ENCODE measurements at regions of chr13 and their contacts with region 1.

Region 1: DNA sequence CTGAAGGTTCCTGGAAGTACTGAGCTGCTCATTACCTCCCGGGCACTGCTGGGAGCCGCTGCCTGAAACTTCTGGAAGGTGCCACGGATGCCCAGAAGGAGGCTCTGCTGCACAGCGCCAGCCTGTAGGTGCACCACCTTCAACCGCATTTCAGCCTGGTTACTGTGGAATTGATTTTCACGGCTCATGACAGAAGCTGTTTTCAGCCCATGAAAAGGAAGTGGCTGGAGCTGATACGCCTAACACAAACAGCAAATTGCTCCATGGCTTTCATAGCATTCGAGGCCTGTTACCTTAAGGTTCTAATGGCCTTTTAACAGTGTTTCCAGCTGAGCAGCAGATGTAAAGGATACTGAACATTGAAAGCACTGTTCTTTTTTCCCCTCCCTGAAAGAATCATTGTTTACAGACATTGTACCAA is 22.0 kb downstream of the GPC6 start:
- DNase-seq: peak in 2 of 4 experiments; percentile 55
- ATAC-seq: peak; percentile 85
- H3K4me3 ChIP-seq: no peak overlapping the region
- H3K27ac ChIP-seq: no peak overlapping the region
- H3K4me1 ChIP-seq: peaks cover 0 to 4% of the 10 kb centered on the region in 2 experiments; a peak in 2 of 5 replicates
- H3K27me3 ChIP-seq: peaks cover 0 to 3% of the 10 kb centered on the region in 2 experiments; a peak in 1 of 5 replicates
- CTCF ChIP-seq: peak in 1 of 3 experiments; percentile 86; a peak in 2 of 6 replicates
- EP300 ChIP-seq: no peak
- POLR2A ChIP-seq: no peak
- RAD21 ChIP-seq: no peak

Region 2: GRCh38 chr13:93262729-93263345 is 14.2 kb after region 1 on chr13:
- CTCF ChIA-PET with region 1: interaction called, 3 read pairs
- POLR2A ChIA-PET with region 1: interaction called, 28 read pairs
- in situ Hi-C with region 1: no loop called
- intact Hi-C with region 1: no loop called
- DNase-seq: peak in 1 of 4 experiments; percentile 32
- ATAC-seq: peak; percentile 54
- H3K4me3 ChIP-seq: no peak overlapping the region
- H3K27ac ChIP-seq: no peak overlapping the region
- H3K4me1 ChIP-seq: no peaks in the 10 kb centered on the region; a peak in 1 of 5 replicates
- H3K27me3 ChIP-seq: no peaks in the 10 kb centered on the region
- CTCF ChIP-seq: no peak
- EP300 ChIP-seq: no peak
- POLR2A ChIP-seq: no peak
- RAD21 ChIP-seq: no peak